ENCODE measurements at regions of chr5 and their contacts with region 1.

Region 1: GRCh38 chr5:133240425-133241091 is 188.7 kb downstream of the HSPA4 start:
- DNase-seq: peak; percentile 4
- H3K4me3 Mint-ChIP-seq: no peak overlapping the region
- H3K27ac Mint-ChIP-seq: no peak overlapping the region
- H3K4me1 Mint-ChIP-seq: peaks cover 21% of the 10 kb centered on the region
- H3K27me3 Mint-ChIP-seq: peaks cover 3% of the 10 kb centered on the region

Region 2: DNA sequence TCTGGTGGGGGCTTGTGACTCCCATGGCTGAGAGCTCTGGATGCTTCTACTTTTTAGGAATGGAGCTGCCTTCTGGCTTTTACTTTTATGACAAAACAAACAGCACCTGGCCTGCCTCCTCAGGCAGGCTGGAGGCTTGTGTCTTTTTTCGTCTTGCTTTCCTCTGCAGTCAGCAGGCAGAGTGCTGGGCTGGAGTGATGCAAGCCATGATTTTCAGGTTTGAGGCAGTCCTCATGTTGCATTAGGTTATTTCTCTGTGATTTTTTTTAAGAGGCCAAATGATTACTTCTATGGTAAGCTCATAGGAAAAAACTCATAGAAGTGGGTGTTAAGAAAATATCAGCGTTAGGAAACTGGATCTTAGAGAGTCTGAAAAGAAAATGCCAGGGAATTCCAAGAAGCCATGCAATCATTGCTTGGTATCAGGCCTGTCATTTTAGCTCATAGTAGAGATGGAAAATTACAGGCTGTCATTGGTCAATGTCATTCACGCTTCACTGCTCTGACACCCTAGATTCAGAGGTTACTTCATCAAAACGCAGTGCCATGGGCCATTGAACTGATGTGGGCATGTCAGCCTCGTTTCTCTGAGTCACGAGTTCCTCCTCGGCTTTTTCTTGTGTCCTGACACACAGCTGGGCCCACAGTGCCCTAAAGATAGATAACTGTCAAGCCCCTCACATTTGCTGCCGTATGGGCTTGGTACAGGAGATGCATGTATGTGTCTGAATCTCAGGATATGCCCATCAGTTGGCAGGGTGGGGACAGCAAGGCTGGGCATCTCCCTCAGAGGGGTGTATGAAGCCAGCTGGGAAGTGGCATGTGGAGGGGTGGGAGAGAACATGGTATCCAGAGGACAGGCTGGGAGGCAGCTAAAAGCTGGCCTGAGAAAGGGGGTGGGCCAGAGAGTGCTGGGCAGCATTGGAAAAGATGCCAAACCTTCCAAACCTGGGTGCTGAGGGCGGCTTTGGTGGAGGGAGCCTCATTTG is 36.9 kb before region 1 on chr5:
- intact Hi-C with region 1: loop called (anchors 1 kb)
- DNase-seq: no peak
- H3K4me3 Mint-ChIP-seq: no peak overlapping the region
- H3K27ac Mint-ChIP-seq: no peak overlapping the region
- H3K4me1 Mint-ChIP-seq: no peaks in the 10 kb centered on the region
- H3K27me3 Mint-ChIP-seq: peaks cover 8% of the 10 kb centered on the region

Region 3: DNA sequence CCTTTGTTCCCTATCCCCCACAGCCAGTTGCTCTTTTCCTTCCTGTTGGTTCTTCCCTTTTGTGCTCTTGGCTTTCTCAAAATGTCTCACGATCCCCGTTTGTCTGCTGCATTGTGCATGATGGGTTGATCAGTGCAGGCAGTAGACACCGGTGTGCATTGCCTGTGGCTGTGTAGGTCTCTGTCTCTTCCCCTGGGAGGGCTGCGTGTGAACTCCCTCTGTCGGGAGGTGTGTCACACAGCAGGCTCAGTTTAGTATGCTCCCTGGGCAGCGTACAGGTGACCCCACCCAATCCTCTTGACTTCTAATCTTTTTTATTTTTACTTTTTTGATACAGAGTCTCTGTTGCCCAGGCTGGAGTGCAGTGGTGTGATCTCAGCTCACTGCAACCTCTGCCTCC is 106.5 kb after region 1 on chr5:
- intact Hi-C with region 1: loop called (anchors 10 kb)
- DNase-seq: no peak
- H3K4me3 Mint-ChIP-seq: no peak overlapping the region
- H3K27ac Mint-ChIP-seq: no peak overlapping the region
- H3K4me1 Mint-ChIP-seq: no peaks in the 10 kb centered on the region
- H3K27me3 Mint-ChIP-seq: peaks cover 11% of the 10 kb centered on the region

Region 4: DNA sequence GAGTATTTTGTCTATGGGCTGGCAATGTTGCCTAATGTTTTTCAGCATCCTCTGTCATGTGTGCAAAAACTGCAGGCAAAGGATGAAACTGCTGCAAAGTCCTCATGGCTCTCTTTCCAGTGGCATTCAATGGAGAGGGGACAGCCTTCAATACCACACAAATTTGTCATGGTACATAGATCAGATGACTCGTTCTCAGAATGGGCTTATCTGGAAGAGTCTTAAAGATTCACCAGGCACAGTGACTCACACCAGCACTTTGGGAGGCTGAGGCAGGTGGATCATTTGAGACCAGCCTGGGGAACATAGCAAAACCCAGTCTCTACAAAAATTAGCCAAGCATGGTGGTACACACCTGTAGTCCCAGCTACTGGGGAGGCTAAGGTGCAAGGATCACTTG is 1165.8 kb after region 1 on chr5:
- intact Hi-C with region 1: no loop called
- DNase-seq: no peak
- H3K4me3 Mint-ChIP-seq: no peak overlapping the region
- H3K27ac Mint-ChIP-seq: no peak overlapping the region
- H3K4me1 Mint-ChIP-seq: peaks cover 24% of the 10 kb centered on the region
- H3K27me3 Mint-ChIP-seq: no peaks in the 10 kb centered on the region

Measured in activated T-helper 1 cell treated with anti-CD3 and anti-CD28 coated beads, Interleukin-12 subunit alpha, Interleukin-12 subunit beta, Interleukin-2, Interleukin-4 antibody, amounts not matched to agents 30 ng/mL and 10 ng/mL and 1 ng/mL, durations not matched to agents 14 hours and 24 hours and 36 hours (primary cell).